GM10248 (cell line): ENCODE measurements at regions of chr3 and their contacts with region 1.

Region 1: GRCh38 chr3:108103886-108104797 is 13.3 kb upstream of the CD47 start:
- DNase-seq: no peak
- CTCF ChIP-seq: no peak

Region 2: DNA sequence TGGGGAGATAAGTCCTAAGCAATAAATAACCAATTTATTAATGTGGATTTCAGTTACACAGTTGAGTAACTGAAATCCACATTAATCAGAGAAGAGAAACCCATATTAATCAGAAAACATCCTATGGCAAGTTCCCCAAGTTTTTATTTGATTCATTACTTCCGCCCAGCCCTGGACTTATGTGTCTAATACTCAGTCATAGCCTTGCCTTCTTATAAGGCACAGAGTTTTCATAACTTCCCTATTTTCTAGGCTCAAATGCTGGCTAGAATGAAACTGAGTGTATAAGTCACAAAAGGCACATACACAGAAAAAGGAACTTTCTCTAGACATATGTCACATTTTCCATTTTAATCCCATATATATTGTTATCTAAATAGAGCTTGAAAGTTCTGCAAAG is 42.1 kb before region 1 on chr3:
- CTCF ChIA-PET with region 1: no interaction called
- POLR2A ChIA-PET with region 1: no interaction called
- DNase-seq: peak; percentile 23
- CTCF ChIP-seq: no peak

Region 3: GRCh38 chr3:108114423-108115065 is 10.4 kb after region 1 on chr3:
- CTCF ChIA-PET with region 1: interaction called, 11 read pairs
- POLR2A ChIA-PET with region 1: no interaction called
- DNase-seq: no peak
- CTCF ChIP-seq: no peak

Region 4: GRCh38 chr3:108420926-108421325 is 316.8 kb after region 1 on chr3:
- CTCF ChIA-PET with region 1: no interaction called
- POLR2A ChIA-PET with region 1: no interaction called
- DNase-seq: no peak
- CTCF ChIP-seq: no peak